PC-9 (cell line): ENCODE measurements at regions of chr2 and their contacts with region 1.

Region 1: GRCh38 chr2:172836386-172836821 is 100.8 kb downstream of the RAPGEF4 start:
- DNase-seq: peak; percentile 82 to 100
- H3K4me3 ChIP-seq: no peak overlapping the region
- H3K27ac ChIP-seq: peak overlapping the region; percentile 77
- H3K4me1 ChIP-seq: peaks cover 44% of the 10 kb centered on the region
- H3K27me3 ChIP-seq: no peaks in the 10 kb centered on the region
- CTCF ChIP-seq: no peak

Region 2: DNA sequence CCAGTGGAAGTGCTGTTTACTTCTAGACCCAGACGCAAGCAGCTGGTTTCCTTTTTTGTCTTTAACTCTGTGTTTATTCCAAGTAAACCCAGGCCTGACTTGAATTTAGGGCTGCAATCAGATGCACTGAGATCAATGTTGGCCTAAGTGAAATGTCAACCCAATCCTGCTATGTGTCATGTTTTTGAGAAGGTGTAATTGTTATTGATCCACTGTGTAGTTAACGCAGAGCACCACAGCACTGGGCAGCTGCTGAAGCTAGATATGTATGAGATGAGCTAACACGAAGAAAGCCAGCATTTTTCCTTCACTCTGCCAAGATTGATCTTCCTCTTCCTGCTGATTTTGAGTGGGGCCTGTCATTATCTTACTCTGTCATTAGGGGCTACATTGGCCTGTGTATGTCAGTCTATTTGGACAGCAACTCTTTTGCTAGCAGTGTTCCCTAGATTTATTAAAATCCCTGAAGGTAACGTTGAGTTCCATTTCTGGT is 770.0 kb before region 1 on chr2:
- CTCF ChIA-PET with region 1: no interaction called
- POLR2A ChIA-PET with region 1: no interaction called
- intact Hi-C with region 1: no loop called
- DNase-seq: no peak
- H3K4me3 ChIP-seq: no peak overlapping the region
- H3K27ac ChIP-seq: no peak overlapping the region
- H3K4me1 ChIP-seq: no peaks in the 10 kb centered on the region
- H3K27me3 ChIP-seq: no peaks in the 10 kb centered on the region
- CTCF ChIP-seq: no peak

Region 3: GRCh38 chr2:172783091-172783898 is 53.1 kb before region 1 on chr2:
- CTCF ChIA-PET with region 1: no interaction called
- POLR2A ChIA-PET with region 1: no interaction called
- intact Hi-C with region 1: loop called (anchors 5 kb)
- DNase-seq: peak; percentile 95 to 100
- H3K4me3 ChIP-seq: no peak overlapping the region
- H3K27ac ChIP-seq: peak overlapping the region; percentile 72
- H3K4me1 ChIP-seq: peaks cover 33% of the 10 kb centered on the region
- H3K27me3 ChIP-seq: no peaks in the 10 kb centered on the region
- CTCF ChIP-seq: no peak; the same call in 1 of the 2 replicates

Region 4: GRCh38 chr2:172914341-172915004 is 78.1 kb after region 1 on chr2:
- CTCF ChIA-PET with region 1: no interaction called
- POLR2A ChIA-PET with region 1: interaction called, 20 read pairs
- intact Hi-C with region 1: no loop called
- DNase-seq: no peak
- H3K4me3 ChIP-seq: no peak overlapping the region
- H3K27ac ChIP-seq: no peak overlapping the region
- H3K4me1 ChIP-seq: peaks cover 4% of the 10 kb centered on the region; the same call in 1 of the 2 replicates
- H3K27me3 ChIP-seq: no peaks in the 10 kb centered on the region
- CTCF ChIP-seq: no peak

Region 5: GRCh38 chr2:172953970-172954852 is 117.8 kb after region 1 on chr2:
- CTCF ChIA-PET with region 1: no interaction called
- POLR2A ChIA-PET with region 1: interaction called, 3 read pairs
- intact Hi-C with region 1: loop called (anchors 1 kb)
- DNase-seq: peak; percentile 80 to 99
- H3K4me3 ChIP-seq: peak overlapping the region; percentile 36; the same call in 1 of the 2 replicates
- H3K27ac ChIP-seq: peak overlapping the region; percentile 85
- H3K4me1 ChIP-seq: peaks cover 44% of the 10 kb centered on the region
- H3K27me3 ChIP-seq: no peaks in the 10 kb centered on the region
- CTCF ChIP-seq: no peak